Cardiac septum (tissue), 1 donor: ENCODE measurements at regions of chr20 and their contacts with region 1.

Region 1: GRCh38 chr20:44080646-44081267 is 106.2 kb downstream of the JPH2 start:
- DNase-seq: peak; percentile 88

Region 2: DNA sequence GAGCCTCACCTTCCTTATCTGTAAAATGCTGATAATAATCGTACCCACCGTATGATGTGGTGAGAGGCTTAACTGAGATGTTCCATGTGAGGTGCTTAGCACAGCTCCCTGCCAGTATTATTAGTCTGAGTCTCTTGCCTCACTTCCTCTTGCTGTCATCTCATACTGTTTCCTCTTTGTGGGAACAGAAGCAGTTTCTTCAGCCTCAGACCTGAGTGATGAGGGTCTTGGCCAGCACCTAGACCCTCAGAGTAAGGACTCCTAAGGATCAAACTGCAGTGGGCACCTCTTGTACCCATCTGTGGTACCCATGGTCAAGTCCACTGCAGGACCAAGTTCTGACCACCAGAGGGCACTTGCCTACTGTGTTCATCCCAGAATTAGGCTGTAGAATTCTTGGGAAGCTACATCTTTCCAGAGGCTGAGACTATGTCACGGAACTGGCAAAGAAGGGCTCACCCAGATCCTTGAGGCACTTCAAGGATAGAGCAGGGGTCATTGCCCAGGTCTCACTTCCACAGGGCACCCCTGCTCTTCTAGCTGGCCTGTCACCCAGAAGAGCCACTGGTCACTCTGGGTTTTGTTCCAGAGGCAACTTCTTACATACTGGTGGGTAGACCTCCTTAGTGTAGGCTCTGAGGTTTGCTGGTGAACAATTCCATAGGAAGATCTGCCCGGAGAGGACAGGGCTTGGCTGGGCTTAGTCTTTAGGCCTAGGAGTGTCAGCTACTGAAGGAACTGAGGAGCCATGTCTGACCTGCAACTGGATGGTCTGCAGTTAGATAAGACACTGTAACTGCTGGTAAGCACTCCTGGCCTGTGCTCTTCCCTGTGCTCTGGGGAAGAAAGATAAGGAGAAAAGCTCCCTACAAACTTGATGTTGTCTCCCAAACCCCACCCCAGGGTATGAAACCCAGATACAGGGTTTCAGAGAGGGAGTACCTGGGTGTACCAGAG is 542.6 kb before region 1 on chr20:
- intact Hi-C with region 1: loop called (anchors 2 kb)
- DNase-seq: peak; percentile 72

Region 3: GRCh38 chr20:43749734-43750294 is 330.9 kb before region 1 on chr20:
- intact Hi-C with region 1: loop called (anchors 1 kb)
- DNase-seq: peak; percentile 92

Region 4: GRCh38 chr20:43767686-43768474 is 312.9 kb before region 1 on chr20:
- intact Hi-C with region 1: loop called (anchors 5 kb)
- DNase-seq: no peak

Region 5: GRCh38 chr20:43840382-43841070 is 240.2 kb before region 1 on chr20:
- intact Hi-C with region 1: loop called (anchors 5 kb)
- DNase-seq: no peak

Region 6: DNA sequence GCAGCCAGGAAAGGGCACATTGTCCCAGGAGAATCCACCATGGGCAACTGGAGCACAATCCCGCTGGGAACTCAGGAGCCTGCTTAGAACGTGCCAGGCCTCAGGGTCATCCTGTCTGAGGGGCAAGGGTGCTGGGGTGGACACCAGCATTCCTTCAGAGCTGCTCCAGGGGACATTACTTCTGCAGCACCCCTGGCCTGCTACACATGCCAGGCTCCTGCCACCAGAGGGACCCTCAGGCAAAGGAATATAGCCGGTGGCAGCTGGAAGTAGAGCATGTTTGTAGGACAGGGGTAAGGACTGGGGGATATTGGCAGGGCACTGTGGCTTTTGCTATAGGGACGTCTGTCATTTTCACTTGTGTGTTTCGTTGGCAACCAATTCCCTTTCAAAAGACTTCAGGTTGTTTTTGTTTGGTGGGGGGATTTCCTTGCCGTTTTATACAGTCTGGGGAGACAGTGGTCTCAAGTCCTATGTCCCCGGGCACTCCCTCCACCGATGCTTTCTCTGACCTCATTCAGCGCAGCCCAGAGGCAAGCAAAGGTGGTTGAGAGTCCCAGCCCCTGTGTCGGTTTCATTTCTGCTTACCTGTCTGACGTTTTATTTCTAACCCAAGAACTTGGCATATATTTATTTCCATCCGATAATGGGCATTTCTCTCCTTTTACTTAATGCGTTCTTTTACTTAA is 24.6 kb before region 1 on chr20:
- intact Hi-C with region 1: loop called (anchors 2 kb)
- DNase-seq: no peak